CD8-positive, alpha-beta memory T cell (primary cell): ENCODE measurements at regions of chr17 and their contacts with region 1.

Region 1: DNA sequence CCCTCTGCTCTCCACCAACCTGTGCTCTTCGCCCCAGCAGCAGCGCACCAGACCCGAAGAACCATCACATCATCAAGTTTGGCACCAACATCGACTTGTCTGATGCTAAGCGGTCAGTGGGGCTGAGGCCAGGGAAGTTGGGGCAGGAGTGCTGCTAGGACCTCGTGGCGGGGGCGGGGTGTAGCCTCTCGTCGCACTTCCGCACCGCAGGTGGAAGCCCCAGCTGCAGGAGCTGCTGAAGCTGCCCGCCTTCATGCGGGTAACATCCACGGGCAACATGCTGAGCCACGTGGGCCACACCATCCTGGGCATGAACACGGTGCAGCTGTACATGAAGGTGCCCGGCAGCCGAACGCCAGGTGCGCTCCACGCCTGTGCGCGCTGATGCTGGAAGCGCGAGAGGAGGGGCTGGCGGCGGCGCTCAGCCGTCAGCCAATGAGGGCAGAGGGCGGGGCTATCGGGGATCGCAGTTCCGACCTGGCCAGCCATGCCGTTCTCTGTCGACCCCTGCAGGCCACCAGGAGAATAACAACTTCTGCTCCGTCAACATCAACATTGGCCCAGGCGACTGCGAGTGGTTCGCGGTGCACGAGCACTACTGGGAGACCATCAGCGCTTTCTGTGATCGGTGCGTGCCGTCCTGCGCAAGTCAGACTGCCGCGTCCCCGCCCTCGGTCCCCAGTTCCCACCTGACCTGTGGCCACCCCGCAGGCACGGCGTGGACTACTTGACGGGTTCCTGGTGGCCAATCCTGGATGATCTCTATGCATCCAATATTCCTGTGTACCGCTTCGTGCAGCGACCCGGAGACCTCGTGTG is 3.2 kb upstream of the TMEM88 start:
- DNase-seq: peak; percentile 92 to 97 (median 94)
- H3K4me3 ChIP-seq: peak overlapping the region; percentile 64
- H3K4me3 Mint-ChIP-seq: peak overlapping the region; percentile 72 to 85 (median 79)
- H3K27ac ChIP-seq: no peak overlapping the region
- H3K27ac Mint-ChIP-seq: peak overlapping the region; percentile 71 to 96 (median 86)
- H3K4me1 ChIP-seq: peaks cover 28% of the 10 kb centered on the region
- H3K4me1 Mint-ChIP-seq: peaks cover 11 to 32% (median 12%) of the 10 kb centered on the region in 3 donors
- H3K27me3 ChIP-seq: no peaks in the 10 kb centered on the region
- H3K27me3 Mint-ChIP-seq: peaks cover 0 to 2% of the 10 kb centered on the region in 2 donors

Region 2: GRCh38 chr17:7834962-7835813 is 16.5 kb before region 1 on chr17:
- CTCF ChIA-PET with region 1: interaction called, 69 read pairs
- POLR2A ChIA-PET with region 1: interaction called, 46 read pairs
- DNase-seq: peak; percentile 88 to 96 (median 90)
- H3K4me3 ChIP-seq: peak overlapping the region; percentile 86
- H3K4me3 Mint-ChIP-seq: peak overlapping the region; percentile 90 to 100 (median 95)
- H3K27ac ChIP-seq: peak overlapping the region; percentile 98
- H3K27ac Mint-ChIP-seq: peak overlapping the region; percentile 99 to 100 (median 99)
- H3K4me1 ChIP-seq: peaks cover 44% of the 10 kb centered on the region
- H3K4me1 Mint-ChIP-seq: peaks cover 46 to 53% (median 48%) of the 10 kb centered on the region in 3 donors
- H3K27me3 ChIP-seq: peaks cover 5% of the 10 kb centered on the region
- H3K27me3 Mint-ChIP-seq: peaks cover 9% of the 10 kb centered on the region in 2 donors

Region 3: DNA sequence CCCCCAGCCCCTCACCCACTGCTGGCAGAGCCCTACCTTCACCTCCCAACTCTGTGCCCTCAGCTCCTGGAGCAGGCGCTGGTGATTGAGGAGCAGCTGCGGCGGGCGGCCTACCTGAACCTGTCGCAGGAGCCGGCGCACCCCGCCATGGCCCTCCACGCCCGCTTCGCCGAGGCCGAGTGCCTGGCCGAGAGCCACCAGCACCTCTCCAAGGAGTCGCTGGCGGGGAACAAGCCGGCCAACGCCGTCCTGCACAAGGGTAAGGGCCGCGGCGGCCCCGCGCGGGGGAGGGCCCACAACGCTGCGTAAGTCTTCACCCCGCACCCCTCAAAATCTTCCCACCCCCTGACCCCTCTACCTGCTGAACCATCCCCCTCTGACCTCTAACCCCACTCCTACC is 57.4 kb after region 1 on chr17:
- CTCF ChIA-PET with region 1: no interaction called
- POLR2A ChIA-PET with region 1: no interaction called
- DNase-seq: no peak
- H3K4me3 ChIP-seq: no peak overlapping the region
- H3K4me3 Mint-ChIP-seq: no peak overlapping the region
- H3K27ac ChIP-seq: no peak overlapping the region
- H3K27ac Mint-ChIP-seq: no peak overlapping the region
- H3K4me1 ChIP-seq: peaks cover 10% of the 10 kb centered on the region
- H3K4me1 Mint-ChIP-seq: peaks cover 7 to 13% (median 8%) of the 10 kb centered on the region in 3 donors
- H3K27me3 ChIP-seq: no peaks in the 10 kb centered on the region
- H3K27me3 Mint-ChIP-seq: peaks cover 0 to 1% of the 10 kb centered on the region in 2 donors